MCF 10A (cell line): ENCODE measurements at regions of chrX and their contacts with region 1.

Region 1: DNA sequence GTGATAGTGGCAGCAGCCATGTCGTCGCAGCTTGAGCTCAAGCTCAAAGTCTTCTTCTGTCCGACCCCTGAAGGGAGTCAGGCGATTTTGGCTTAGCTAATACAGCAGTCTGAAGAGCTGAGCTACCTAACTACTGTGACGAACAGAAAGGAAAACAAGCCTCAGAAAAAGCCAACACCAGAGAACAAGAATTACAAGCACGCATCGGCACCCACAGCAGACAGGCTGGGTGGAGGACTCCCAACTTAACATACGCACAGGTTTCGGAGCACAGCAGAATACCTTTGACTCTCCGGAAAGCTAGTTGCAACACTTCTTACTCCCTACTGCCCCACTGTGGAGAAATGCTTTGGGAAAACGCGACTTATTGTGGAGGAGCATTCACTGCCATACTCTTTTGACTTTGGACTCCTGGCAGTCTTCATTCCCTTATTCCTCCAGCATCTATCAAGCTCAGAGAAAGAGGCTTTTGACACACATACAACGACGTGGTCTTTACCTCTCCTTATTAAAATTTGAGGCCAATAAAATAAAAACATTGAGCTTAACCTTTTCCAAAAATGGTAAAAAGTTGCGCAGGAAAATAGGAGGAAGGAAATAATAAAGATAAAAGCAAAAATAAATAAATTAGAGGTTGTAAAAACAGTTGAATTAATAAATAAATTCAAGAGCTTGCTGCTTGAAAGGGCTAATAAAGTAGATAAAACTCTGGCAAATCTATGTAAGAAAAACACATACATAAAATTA is 41.3 kb upstream of the GPC3 start:
- DNase-seq: peak; percentile 70
- H3K4me3 Mint-ChIP-seq: no peak overlapping the region
- H3K27ac Mint-ChIP-seq: no peak overlapping the region
- H3K4me1 Mint-ChIP-seq: no peaks in the 10 kb centered on the region
- H3K27me3 Mint-ChIP-seq: peaks cover 44% of the 10 kb centered on the region
- CTCF ChIP-seq: peak; percentile 42

Region 2: GRCh38 chrX:133859860-133860259 is 166.9 kb before region 1 on chrX:
- CTCF ChIA-PET with region 1: interaction called, 3 read pairs
- POLR2A ChIA-PET with region 1: no interaction called
- intact Hi-C with region 1: loop called (anchors 10 kb)
- DNase-seq: peak; percentile 49
- H3K4me3 Mint-ChIP-seq: no peak overlapping the region
- H3K27ac Mint-ChIP-seq: peak overlapping the region; percentile 58
- H3K4me1 Mint-ChIP-seq: peaks cover 7% of the 10 kb centered on the region
- H3K27me3 Mint-ChIP-seq: peaks cover 63% of the 10 kb centered on the region
- CTCF ChIP-seq: no peak

Region 3: DNA sequence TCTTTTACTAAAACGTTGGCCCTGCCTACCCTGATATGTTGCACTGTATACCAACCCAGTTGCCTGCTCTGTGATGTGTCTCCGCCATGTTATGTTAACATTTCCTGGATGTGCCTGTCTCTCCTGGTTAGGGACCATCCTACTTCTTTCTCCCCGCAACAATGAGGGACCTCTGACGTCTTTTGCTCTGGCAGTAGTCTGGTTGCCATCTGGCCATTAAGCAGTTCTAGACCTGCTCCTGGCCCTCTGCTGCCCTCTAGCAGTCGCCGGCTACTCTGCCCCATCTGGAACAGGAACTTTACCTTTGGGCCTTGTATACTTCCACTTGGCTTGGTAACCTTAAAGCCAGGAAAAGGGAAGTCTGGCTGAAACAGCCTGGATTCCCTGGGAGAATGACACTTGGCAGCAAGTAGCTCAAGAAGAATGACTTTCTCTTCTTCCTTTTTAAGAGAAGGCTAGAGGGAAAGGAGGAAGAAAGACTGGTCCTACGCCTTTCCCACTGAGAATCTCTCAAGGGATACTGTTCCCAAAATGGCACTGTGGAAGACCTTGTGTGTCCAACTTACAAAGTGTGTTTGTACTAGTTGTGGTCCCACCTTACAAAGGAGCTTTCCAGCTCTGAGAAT is 104.9 kb before region 1 on chrX:
- CTCF ChIA-PET with region 1: interaction called, 13 read pairs
- POLR2A ChIA-PET with region 1: no interaction called
- intact Hi-C with region 1: loop called (anchors 2 kb)
- DNase-seq: peak; percentile 48
- H3K4me3 Mint-ChIP-seq: no peak overlapping the region
- H3K27ac Mint-ChIP-seq: no peak overlapping the region
- H3K4me1 Mint-ChIP-seq: peaks cover 5% of the 10 kb centered on the region
- H3K27me3 Mint-ChIP-seq: peaks cover 66% of the 10 kb centered on the region
- CTCF ChIP-seq: peak; percentile 54

Region 4: DNA sequence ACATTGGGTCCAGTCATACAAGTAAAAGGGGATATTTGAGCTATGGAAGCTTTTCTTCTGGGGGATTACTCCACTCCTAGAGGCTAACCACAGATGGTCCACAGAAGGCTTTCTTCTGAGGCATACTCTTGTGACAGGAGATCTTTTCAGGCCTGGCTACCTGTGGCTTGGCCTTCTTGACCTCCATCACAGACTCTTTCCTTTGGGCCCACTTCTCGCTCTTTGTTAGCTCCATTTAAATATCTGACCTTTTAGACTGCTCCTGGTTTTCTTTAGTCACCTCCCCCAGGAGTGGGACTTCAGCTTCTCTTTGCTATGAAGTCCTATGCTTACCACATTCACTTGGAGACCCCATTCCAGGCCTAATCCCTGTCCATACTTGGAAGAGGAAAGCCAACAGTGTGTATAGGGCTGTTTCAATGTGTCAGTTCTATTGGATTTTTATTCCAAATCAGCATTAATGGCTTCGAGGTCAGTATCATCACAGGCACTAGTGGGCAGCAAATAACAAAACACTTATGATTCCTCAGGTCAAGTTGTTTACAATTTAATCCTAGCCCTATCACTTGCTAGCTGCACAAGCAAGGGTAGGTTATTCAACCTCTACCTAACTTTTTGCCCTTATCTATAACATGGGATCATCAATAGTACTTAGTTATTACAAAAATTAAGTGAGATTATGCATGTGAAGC is 67.6 kb before region 1 on chrX:
- CTCF ChIA-PET with region 1: interaction called, 11 read pairs
- POLR2A ChIA-PET with region 1: no interaction called
- intact Hi-C with region 1: loop called (anchors 2 kb)
- DNase-seq: peak; percentile 4
- H3K4me3 Mint-ChIP-seq: no peak overlapping the region
- H3K27ac Mint-ChIP-seq: no peak overlapping the region
- H3K4me1 Mint-ChIP-seq: no peaks in the 10 kb centered on the region
- H3K27me3 Mint-ChIP-seq: peaks cover 37% of the 10 kb centered on the region
- CTCF ChIP-seq: no peak

Region 5: DNA sequence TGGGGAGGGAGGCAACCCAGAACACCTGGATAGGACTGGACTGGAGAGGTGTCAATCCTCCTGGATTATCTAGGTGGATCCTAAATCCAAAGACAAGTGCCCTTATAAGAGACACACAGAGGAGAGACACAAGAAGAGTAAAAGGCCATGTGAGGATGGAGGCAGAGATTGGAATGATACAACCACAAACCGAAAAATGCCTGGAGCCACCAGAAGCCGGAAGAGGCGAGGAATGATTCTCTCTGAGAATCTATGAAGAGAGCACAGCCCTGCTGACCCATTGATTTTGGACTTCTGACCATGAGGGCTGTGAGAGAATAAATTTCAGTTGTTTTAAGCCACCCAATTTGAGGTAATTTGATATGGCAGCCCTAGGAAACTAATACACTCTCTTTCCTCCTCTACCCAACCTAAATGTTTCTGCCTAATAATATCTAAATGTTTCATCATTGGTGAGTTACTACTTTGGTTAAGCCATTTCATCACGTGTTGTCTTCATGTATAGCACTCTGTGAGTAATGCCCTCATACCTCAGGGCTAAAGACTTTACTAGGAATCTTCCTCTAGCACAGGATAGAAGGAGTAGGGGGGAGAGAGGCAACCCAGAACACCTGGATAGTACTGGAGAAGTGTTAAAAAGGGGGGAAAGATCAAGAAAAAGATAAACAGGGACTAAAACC is 61.3 kb before region 1 on chrX:
- CTCF ChIA-PET with region 1: interaction called, 11 read pairs
- POLR2A ChIA-PET with region 1: no interaction called
- intact Hi-C with region 1: no loop called
- DNase-seq: peak; percentile 2
- H3K4me3 Mint-ChIP-seq: no peak overlapping the region
- H3K27ac Mint-ChIP-seq: no peak overlapping the region
- H3K4me1 Mint-ChIP-seq: peaks cover 11% of the 10 kb centered on the region
- H3K27me3 Mint-ChIP-seq: peaks cover 50% of the 10 kb centered on the region
- CTCF ChIP-seq: no peak

Region 6: GRCh38 chrX:134144231-134144630 is 117.5 kb after region 1 on chrX:
- CTCF ChIA-PET with region 1: interaction called, 11 read pairs
- POLR2A ChIA-PET with region 1: no interaction called
- intact Hi-C with region 1: loop called (anchors 10 kb)
- DNase-seq: peak; percentile 36
- H3K4me3 Mint-ChIP-seq: no peak overlapping the region
- H3K27ac Mint-ChIP-seq: no peak overlapping the region
- H3K4me1 Mint-ChIP-seq: no peaks in the 10 kb centered on the region
- H3K27me3 Mint-ChIP-seq: peaks cover 34% of the 10 kb centered on the region
- CTCF ChIP-seq: peak; percentile 38